ENCODE measurements at regions of chr19 and their contacts with region 1.

Region 1: GRCh38 chr19:45782820-45783785 is 813 bp upstream of the DMPK start:
- DNase-seq: no peak
- H3K4me3 Mint-ChIP-seq: no peak overlapping the region
- H3K27ac Mint-ChIP-seq: peak overlapping the region; percentile 12
- H3K4me1 Mint-ChIP-seq: peaks cover 17% of the 10 kb centered on the region
- H3K27me3 Mint-ChIP-seq: no peaks in the 10 kb centered on the region
- CTCF ChIP-seq: no peak

Region 2: GRCh38 chr19:45753546-45753945 is 29.6 kb before region 1 on chr19:
- CTCF ChIA-PET with region 1: interaction called, 11 read pairs
- intact Hi-C with region 1: no loop called
- DNase-seq: no peak
- H3K4me3 Mint-ChIP-seq: no peak overlapping the region
- H3K27ac Mint-ChIP-seq: no peak overlapping the region
- H3K4me1 Mint-ChIP-seq: no peaks in the 10 kb centered on the region
- H3K27me3 Mint-ChIP-seq: peaks cover 38% of the 10 kb centered on the region
- CTCF ChIP-seq: no peak